Stomach (tissue), 19 donors: ENCODE measurements at regions of chr9 and their contacts with region 1.

Region 1: GRCh38 chr9:128034821-128035764 is 32.0 kb downstream of the NAIF1 start:
- DNase-seq: peak; percentile 73 to 93
- H3K4me3 ChIP-seq: no peak overlapping the region
- H3K27ac ChIP-seq: peak overlapping the region in 1 of 5 donors; percentile 50
- H3K4me1 ChIP-seq: peaks cover 0 to 11% (median 3%) of the 10 kb centered on the region in 4 donors
- H3K27me3 ChIP-seq: no peaks in the 10 kb centered on the region
- CTCF ChIP-seq: peak in 6 of 7 experiments; percentile 47 to 97 (median 92)
- EP300 ChIP-seq: no peak
- POLR2A ChIP-seq: no peak

Region 2: DNA sequence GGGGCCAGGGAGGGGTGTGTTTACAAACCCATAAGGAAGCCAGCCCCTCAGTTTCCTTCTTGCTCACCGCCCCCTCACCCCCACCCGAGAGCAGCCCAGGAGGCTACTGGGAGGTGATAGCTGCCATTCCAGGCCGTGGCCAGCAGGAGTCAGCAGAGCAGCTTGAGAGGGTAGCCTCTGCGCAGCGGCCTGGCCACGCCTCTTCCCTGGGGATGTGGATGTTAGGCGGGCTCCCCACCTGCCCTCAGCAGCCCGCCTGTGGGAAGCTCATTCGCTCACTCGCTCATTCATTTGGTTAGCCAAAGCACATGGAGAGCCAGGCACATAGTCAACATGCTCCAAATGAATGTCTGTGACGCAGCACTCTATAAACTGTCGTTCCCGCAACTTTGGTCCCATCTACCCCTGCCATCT is 91.4 kb before region 1 on chr9:
- intact Hi-C with region 1: loop called (anchors 5 kb)
- DNase-seq: peak; percentile 87 to 93
- H3K4me3 ChIP-seq: no peak overlapping the region
- H3K27ac ChIP-seq: peak overlapping the region in 3 of 5 donors; percentile 9 to 46 (median 40)
- H3K4me1 ChIP-seq: peaks cover 10 to 55% (median 34%) of the 10 kb centered on the region in 4 donors
- H3K27me3 ChIP-seq: no peaks in the 10 kb centered on the region
- CTCF ChIP-seq: peak in 5 of 7 experiments; percentile 90 to 93 (median 92)
- EP300 ChIP-seq: no peak
- POLR2A ChIP-seq: no peak

Region 3: DNA sequence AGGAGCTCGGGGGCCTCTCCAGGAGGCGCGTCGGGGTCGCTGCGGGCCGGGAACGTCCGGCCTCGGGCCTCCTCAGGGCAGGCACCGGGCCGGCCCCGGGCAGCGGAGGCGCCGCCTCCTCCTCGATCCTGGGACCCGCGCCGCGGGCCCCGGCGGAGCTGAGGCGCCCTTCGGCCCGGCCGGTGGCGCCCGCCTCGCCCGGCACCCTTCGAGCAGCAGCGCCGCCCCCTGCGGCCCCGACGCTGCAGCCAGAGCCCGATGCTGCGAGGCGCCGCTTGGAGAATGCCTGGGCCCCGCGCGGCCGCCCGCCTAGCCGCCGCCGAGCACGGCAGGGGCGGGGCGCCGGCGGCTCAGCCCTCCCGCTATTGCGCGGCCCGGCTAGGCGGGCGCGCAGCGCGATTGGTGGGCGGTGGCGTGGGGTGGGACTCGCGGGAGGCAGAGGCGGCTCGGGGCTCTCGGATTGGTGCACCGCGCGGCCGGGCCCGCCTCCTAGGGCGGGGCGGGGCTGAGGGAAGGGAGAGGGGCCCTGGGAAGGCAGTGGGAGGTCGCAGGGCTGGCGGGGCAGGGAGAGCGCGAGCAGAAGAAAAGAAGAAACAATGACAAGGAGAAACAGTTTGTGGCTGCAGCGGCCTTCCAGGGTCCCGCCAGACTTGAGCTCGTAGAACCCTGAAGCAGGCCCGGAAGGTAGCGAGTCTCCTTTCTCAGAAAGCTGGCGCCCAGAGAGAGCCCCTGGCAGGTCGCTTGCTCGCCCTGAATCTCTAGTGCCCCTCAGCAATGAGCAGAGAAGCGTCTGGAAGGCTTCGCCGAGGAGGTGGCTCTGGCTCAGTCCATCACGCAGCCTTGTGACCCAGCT is 54.2 kb before region 1 on chr9 and contains the start of gene EEIG1:
- intact Hi-C with region 1: loop called (anchors 10 kb)
- DNase-seq: peak; percentile 96 to 99
- H3K4me3 ChIP-seq: peak within 1 kb of the TSS; percentile 77 to 91 (median 90)
- H3K27ac ChIP-seq: peak within 1 kb of the TSS; percentile 91 to 99 (median 94)
- H3K4me1 ChIP-seq: peaks cover 36 to 67% (median 50%) of the 10 kb centered on the region in 4 donors
- H3K27me3 ChIP-seq: no peaks in the 10 kb centered on the region
- CTCF ChIP-seq: no peak
- EP300 ChIP-seq: no peak
- POLR2A ChIP-seq: peak in 1 of 4 donors; percentile 29
- total RNA-seq, gene EEIG1: 26.3 to 406 (median 83.4) TPM